PC-9 (cell line): ENCODE measurements at regions of chr4 and their contacts with region 1.

Region 1: GRCh38 chr4:153249199-153250041 is 45.2 kb downstream of the TRIM2 start:
- DNase-seq: peak; percentile 79 to 89
- H3K4me3 ChIP-seq: peak overlapping the region; percentile 70
- H3K27ac ChIP-seq: peak overlapping the region; percentile 66
- H3K4me1 ChIP-seq: peaks cover 25% of the 10 kb centered on the region
- H3K27me3 ChIP-seq: no peaks in the 10 kb centered on the region
- CTCF ChIP-seq: no peak

Region 2: GRCh38 chr4:153232768-153233167 is 16.7 kb before region 1 on chr4:
- CTCF ChIA-PET with region 1: no interaction called
- POLR2A ChIA-PET with region 1: no interaction called
- intact Hi-C with region 1: loop called (anchors 1 kb)
- DNase-seq: peak; percentile 57 to 60
- H3K4me3 ChIP-seq: no peak overlapping the region
- H3K27ac ChIP-seq: peak overlapping the region; percentile 68
- H3K4me1 ChIP-seq: peaks cover 62% of the 10 kb centered on the region
- H3K27me3 ChIP-seq: no peaks in the 10 kb centered on the region
- CTCF ChIP-seq: no peak; the same call in 1 of the 2 replicates

Region 3: DNA sequence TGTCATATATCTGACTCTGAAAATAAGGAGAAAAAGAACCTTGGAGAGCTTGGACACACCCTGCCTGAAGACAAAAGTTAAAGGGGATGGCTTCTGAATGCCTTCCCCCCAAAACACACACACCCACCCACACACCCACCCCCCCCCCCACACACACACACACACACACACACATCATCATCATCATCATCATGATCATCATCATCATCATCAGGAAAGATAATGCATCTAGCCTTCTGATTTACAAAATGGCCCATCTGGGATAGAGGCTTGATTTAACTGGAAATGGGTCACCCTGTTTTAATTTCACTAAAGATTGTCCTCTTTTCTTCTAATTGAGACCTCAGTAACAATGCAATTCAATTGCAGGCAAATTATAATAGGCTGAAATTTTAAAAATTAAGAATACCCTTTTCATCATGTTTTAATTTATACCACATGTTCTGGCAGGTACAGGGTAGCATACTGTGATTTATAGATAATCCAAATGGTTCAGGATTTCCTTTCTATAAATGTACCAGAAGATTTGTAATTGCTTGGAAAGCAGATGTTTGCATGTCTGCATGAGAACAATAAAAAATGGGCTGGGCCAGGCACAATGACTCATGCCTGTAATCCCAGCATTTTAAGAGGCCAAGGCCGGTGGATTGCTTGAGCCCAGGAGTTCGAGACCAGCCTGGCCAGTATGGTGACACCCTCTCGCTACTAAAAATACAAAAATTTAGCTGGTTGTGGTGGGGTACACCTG is 11.3 kb after region 1 on chr4:
- CTCF ChIA-PET with region 1: interaction called, 16 read pairs
- POLR2A ChIA-PET with region 1: interaction called, 8 read pairs
- intact Hi-C with region 1: no loop called
- DNase-seq: no peak
- H3K4me3 ChIP-seq: no peak overlapping the region
- H3K27ac ChIP-seq: no peak overlapping the region
- H3K4me1 ChIP-seq: no peaks in the 10 kb centered on the region
- H3K27me3 ChIP-seq: no peaks in the 10 kb centered on the region
- CTCF ChIP-seq: no peak